Endothelial cell of umbilical vein (primary cell): ENCODE measurements at regions of chr1 and their contacts with region 1.

Region 1: GRCh38 chr1:32215629-32216480 is 6.3 kb downstream of the TMEM234 start:
- DNase-seq: peak; percentile 60
- H3K4me3 ChIP-seq: no peak overlapping the region
- H3K27ac ChIP-seq: no peak overlapping the region
- H3K4me1 ChIP-seq: peaks cover 3% of the 10 kb centered on the region
- H3K27me3 ChIP-seq: no peaks in the 10 kb centered on the region
- CTCF ChIP-seq: peak; percentile 84 to 89
- POLR2A ChIP-seq: no peak

Region 2: DNA sequence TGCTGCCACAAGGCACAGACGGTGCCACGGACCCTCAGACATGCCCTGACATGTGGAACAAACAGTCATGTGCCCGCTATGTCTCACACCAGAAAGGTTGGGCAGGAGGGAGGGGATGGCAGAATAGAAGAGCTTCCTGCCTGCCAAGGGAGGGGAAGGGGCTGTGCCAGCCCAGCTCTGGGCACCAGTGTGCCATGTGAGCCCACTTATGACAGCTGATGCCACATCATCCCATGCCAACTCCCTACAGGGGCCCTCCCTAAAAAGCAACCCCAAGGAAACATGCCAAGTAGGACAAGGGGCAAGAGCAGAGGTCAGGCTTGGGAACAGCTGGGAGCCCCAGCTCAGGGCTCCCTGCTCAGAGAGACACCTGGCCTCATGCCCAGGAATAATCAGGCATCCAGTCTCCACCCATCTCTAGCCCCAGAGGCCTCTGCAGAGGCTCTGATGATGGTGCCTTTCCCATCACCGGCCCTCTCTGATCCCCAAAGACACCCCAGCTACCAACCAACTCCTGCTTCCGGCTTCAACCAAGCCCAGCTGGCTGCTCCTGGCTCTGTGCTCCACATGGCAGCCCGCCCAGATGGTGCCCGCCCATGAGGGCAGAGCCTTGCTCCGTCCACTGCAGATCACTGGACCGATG is 462.0 kb before region 1 on chr1:
- CTCF ChIA-PET with region 1: no interaction called
- POLR2A ChIA-PET with region 1: no interaction called
- dilution Hi-C with region 1: no loop called
- intact Hi-C with region 1: no loop called
- DNase-seq: no peak
- H3K4me3 ChIP-seq: no peak overlapping the region
- H3K27ac ChIP-seq: no peak overlapping the region
- H3K4me1 ChIP-seq: no peaks in the 10 kb centered on the region
- H3K27me3 ChIP-seq: peaks cover 0 to 4% of the 10 kb centered on the region in 2 experiments
- CTCF ChIP-seq: no peak
- POLR2A ChIP-seq: no peak

Region 3: DNA sequence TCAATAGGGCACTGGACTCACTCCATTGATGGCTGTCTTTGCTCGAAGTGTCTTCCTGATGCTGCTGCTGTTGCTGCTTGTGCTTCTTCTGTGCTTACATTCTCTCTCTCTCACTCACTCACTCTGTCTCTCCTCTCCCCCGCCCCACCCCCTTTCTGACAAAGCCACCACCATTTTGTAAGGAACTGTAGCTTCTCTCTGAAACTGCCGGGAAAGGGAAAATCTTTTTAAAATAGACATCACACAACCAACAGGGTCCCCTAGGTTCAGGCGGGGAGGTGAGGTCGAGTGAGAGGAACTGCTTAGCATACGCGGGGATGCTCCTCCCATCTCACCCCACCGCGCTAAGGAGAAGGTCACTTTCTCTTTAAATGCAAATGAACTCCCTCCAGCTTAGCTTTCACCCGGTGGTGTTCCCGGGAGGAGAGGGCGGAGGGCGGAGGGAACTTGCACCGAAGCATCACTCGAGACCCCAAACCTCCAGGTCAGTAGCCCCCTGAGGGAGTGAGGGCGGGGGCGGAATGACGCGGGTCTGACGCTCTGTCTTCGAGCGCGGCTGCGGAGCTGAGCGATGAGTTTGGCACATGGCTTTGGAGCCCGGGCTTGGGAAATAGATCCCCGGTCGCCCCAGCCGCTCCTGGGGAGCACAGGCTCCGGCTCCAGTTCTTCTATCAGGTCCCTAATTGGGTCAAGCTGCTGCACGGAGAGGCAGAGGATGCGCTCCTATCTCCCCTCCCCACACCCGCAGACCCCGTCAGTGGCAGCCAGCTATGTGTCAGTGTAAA is 15.4 kb before region 1 on chr1 and contains the start of gene CCDC28B:
- CTCF ChIA-PET with region 1: interaction called, 25 read pairs
- POLR2A ChIA-PET with region 1: interaction called, 4 read pairs
- dilution Hi-C with region 1: no loop called
- intact Hi-C with region 1: no loop called
- DNase-seq: peak; percentile 66
- H3K4me3 ChIP-seq: peak within 1 kb of the TSS; percentile 49 to 60 (median 56)
- H3K27ac ChIP-seq: peak within 1 kb of the TSS; percentile 54
- H3K4me1 ChIP-seq: peaks cover 19% of the 10 kb centered on the region
- H3K27me3 ChIP-seq: no peaks in the 10 kb centered on the region
- CTCF ChIP-seq: no peak
- POLR2A ChIP-seq: no peak
- total RNA-seq, gene CCDC28B: 12.0 and 15.3 TPM in 2 replicates

Region 4: DNA sequence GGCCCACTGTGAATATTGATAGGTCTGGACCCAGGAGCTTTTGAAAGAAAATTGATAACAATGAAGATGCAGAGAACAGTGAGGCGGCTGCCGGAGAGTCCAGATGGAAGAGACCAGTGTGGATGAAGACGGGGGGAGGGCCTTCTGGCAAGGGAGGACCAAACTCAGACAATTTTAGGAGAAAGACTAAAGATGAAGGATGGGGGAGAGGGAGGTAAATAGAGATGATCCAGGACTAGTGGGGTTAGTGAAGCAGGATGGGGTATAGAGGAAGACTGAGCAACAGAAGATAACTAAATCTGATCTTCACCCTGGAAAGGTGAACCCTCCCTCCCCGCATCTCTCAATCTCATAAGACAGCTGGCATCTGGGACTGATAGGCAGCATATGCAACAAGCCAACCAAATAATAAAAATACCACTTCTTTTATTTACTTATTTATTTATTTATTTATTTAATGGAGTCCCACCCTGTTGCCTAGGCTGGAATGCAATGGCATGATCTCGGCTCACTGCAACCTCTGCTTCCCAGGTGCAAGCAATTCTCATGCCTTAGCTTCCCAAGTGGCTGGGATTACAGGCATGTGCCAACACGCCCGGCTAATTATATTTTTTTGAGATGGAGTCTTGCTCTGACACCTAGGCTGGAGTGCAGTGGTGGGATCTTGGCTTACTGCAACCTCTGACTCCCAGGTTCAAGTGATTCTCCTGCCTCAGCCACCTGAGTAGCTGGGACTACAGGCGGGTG is 16.9 kb after region 1 on chr1:
- CTCF ChIA-PET with region 1: interaction called, 13 read pairs
- POLR2A ChIA-PET with region 1: no interaction called
- dilution Hi-C with region 1: no loop called
- intact Hi-C with region 1: no loop called
- DNase-seq: no peak
- H3K4me3 ChIP-seq: no peak overlapping the region
- H3K27ac ChIP-seq: no peak overlapping the region
- H3K4me1 ChIP-seq: peaks cover 8% of the 10 kb centered on the region
- H3K27me3 ChIP-seq: no peaks in the 10 kb centered on the region
- CTCF ChIP-seq: no peak
- POLR2A ChIP-seq: no peak

Region 5: GRCh38 chr1:32247983-32248889 is 32.4 kb after region 1 on chr1:
- CTCF ChIA-PET with region 1: interaction called, 47 read pairs
- POLR2A ChIA-PET with region 1: interaction called, 5 read pairs
- dilution Hi-C with region 1: no loop called
- intact Hi-C with region 1: no loop called
- DNase-seq: peak; percentile 74
- H3K4me3 ChIP-seq: peak overlapping the region in 1 of 3 experiments; percentile 29
- H3K27ac ChIP-seq: peak overlapping the region; percentile 60
- H3K4me1 ChIP-seq: peaks cover 47% of the 10 kb centered on the region
- H3K27me3 ChIP-seq: no peaks in the 10 kb centered on the region
- CTCF ChIP-seq: peak; percentile 96 to 98
- POLR2A ChIP-seq: no peak

Region 6: GRCh38 chr1:32335790-32336590 is 120.1 kb after region 1 on chr1 and contains the start of gene MARCKSL1:
- CTCF ChIA-PET with region 1: interaction called, 12 read pairs
- POLR2A ChIA-PET with region 1: interaction called, 17 read pairs
- dilution Hi-C with region 1: no loop called
- intact Hi-C with region 1: loop called (anchors 5 kb)
- DNase-seq: peak; percentile 75
- H3K4me3 ChIP-seq: peak within 1 kb of the TSS; percentile 28 to 87 (median 80)
- H3K27ac ChIP-seq: peak within 1 kb of the TSS; percentile 49
- H3K4me1 ChIP-seq: peaks cover 14% of the 10 kb centered on the region
- H3K27me3 ChIP-seq: no peaks in the 10 kb centered on the region
- CTCF ChIP-seq: no peak
- POLR2A ChIP-seq: peak; percentile 98
- total RNA-seq, gene MARCKSL1: 249 and 265 TPM in 2 replicates

Region 7: DNA sequence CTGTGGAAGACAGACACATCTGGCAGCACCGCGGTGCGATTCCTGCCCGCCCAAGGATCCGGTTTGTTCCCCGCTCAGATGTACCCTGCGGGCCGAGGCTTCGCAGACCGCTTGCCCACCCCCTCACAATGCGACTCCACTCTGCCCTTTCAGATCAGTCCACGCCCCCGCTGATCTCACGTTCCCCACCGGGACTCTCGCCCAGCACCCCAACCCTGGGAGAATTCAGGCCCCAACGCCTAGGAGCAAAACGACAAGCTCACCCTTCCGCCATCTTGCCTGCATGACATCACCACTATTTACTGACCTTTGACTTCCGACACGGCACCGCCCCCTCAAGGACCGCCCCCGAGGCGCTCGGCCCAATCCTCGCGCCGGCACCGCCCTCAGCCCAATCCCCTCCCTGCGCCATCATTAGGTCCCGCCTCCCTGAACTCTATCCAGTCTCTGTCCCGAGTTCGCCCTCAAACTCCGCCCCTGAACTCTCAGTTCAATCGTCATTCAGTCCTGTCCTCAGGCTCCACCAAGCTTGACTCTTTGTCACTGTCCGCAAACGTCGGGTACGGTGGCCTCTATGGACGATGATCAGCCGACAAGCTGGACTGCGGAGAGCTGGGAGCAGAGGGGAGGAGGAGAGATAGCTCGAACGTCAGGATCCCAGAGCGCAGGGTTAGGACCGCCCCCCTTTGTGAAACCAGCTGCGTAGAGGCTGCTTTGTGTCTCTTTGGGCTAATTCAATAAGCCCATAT is 178.5 kb after region 1 on chr1 and contains the start of gene BSDC1:
- CTCF ChIA-PET with region 1: interaction called, 11 read pairs
- POLR2A ChIA-PET with region 1: no interaction called
- dilution Hi-C with region 1: no loop called
- intact Hi-C with region 1: no loop called
- DNase-seq: peak; percentile 99
- H3K4me3 ChIP-seq: peak within 1 kb of the TSS; percentile 56 to 76 (median 65)
- H3K27ac ChIP-seq: peak within 1 kb of the TSS; percentile 60
- H3K4me1 ChIP-seq: peaks cover 15% of the 10 kb centered on the region
- H3K27me3 ChIP-seq: no peaks in the 10 kb centered on the region
- CTCF ChIP-seq: no peak
- POLR2A ChIP-seq: no peak
- total RNA-seq, gene BSDC1: 64.6 and 64.8 TPM in 2 replicates

Region 8: DNA sequence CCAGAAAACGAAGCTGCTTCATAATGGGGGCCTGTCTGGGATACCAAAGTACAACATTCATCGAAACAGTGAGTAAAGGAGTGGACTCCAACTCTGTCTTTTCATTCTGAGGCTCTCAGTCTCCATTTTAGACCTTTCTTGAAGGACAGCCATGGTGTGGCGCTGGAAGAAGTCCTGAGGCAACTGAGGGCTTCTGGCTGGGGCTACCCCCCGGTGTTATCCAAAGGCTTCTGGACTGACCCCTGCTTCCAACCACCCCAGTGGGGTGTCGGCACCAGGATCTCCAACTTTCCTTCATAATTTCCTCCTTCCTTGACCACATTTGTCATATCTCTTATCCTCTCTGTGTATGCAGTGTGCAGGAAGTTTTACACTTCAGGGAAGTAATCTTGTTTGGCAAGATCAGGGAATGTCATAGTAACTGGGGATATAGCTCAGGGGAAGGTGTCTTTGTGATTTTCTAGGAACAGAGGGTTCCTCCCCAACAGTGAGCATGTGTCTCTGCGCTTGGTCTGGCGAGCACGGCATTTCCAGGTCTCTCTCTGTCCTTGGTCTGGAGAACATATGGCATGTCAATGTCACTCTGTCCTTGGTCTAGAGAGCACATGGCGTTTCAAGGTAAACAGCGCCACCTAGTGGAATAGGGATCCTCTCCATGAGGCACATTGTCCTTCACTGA is 197.8 kb after region 1 on chr1:
- CTCF ChIA-PET with region 1: interaction called, 33 read pairs
- POLR2A ChIA-PET with region 1: interaction called, 3 read pairs
- dilution Hi-C with region 1: no loop called
- intact Hi-C with region 1: loop called (anchors 1 kb)
- DNase-seq: peak; percentile 63
- H3K4me3 ChIP-seq: no peak overlapping the region
- H3K27ac ChIP-seq: no peak overlapping the region
- H3K4me1 ChIP-seq: no peaks in the 10 kb centered on the region
- H3K27me3 ChIP-seq: peaks cover 9 to 10% of the 10 kb centered on the region in 2 experiments
- CTCF ChIP-seq: peak; percentile 72 to 83
- POLR2A ChIP-seq: no peak

Region 9: GRCh38 chr1:33010932-33011731 is 795.3 kb after region 1 on chr1:
- CTCF ChIA-PET with region 1: no interaction called
- POLR2A ChIA-PET with region 1: no interaction called
- dilution Hi-C with region 1: no loop called
- intact Hi-C with region 1: no loop called
- DNase-seq: peak; percentile 86
- H3K4me3 ChIP-seq: no peak overlapping the region
- H3K27ac ChIP-seq: no peak overlapping the region
- H3K4me1 ChIP-seq: peaks cover 13% of the 10 kb centered on the region
- H3K27me3 ChIP-seq: no peaks in the 10 kb centered on the region
- CTCF ChIP-seq: no peak
- POLR2A ChIP-seq: no peak